ENCODE measurements at regions of chr17 and their contacts with region 1.

Region 1: DNA sequence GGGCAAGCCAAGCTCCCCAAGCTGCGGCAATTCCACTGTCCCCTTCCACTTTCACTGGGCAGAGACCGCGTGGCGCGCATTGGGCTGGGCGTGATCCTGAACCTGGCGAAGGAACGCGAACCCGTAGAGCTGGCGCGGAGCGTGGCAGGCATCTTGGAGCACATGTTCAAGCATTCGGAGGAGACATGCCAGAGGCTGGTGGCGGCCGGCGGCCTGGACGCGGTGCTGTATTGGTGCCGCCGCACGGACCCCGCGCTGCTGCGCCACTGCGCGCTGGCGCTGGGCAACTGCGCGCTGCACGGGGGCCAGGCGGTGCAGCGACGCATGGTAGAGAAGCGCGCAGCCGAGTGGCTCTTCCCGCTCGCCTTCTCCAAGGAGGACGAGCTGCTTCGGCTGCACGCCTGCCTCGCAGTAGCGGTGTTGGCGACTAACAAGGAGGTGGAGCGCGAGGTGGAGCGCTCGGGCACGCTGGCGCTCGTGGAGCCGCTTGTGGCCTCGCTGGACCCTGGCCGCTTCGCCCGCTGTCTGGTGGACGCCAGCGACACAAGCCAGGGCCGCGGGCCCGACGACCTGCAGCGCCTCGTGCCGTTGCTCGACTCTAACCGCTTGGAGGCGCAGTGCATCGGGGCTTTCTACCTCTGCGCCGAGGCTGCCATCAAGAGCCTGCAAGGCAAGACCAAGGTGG is 9.8 kb downstream of the SARM1 start:
- DNase-seq: peak; percentile 51
- H3K4me3 Mint-ChIP-seq: no peak overlapping the region
- H3K27ac Mint-ChIP-seq: no peak overlapping the region
- H3K4me1 Mint-ChIP-seq: peaks cover 27% of the 10 kb centered on the region
- H3K27me3 Mint-ChIP-seq: peaks cover 29% of the 10 kb centered on the region

Region 2: DNA sequence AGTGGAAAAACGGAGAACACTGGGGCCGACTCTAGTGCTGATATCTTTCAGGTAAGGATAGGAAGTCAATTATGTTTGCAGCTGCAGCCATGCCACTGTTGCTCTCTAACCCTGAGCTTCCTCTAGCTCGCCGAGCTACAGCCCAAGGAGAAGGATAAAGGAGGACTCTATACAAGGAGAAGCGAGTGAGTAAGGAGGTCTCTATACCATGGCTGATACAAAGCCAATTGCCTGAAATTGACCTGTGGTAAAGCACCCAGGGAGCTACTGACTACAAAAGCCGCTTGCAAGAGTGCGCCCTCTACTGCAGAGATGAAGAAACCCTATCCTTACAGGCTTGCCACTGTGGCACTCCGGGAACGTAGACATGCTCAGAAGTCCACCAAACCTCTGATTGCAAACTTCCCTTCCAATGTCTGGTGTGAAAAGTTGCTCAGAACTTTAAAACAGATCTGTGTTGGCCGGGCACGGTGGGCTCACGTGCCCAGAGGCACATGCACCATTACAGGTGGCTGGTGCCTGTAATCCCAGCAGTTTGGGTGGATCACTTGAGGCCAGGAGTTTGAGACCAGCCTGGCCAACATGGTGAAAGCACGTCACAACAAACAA is 35.5 kb after region 1 on chr17:
- CTCF ChIA-PET with region 1: interaction called, 22 read pairs
- DNase-seq: peak; percentile 71
- H3K4me3 Mint-ChIP-seq: no peak overlapping the region
- H3K27ac Mint-ChIP-seq: no peak overlapping the region
- H3K4me1 Mint-ChIP-seq: no peaks in the 10 kb centered on the region
- H3K27me3 Mint-ChIP-seq: peaks cover 21% of the 10 kb centered on the region

Region 3: DNA sequence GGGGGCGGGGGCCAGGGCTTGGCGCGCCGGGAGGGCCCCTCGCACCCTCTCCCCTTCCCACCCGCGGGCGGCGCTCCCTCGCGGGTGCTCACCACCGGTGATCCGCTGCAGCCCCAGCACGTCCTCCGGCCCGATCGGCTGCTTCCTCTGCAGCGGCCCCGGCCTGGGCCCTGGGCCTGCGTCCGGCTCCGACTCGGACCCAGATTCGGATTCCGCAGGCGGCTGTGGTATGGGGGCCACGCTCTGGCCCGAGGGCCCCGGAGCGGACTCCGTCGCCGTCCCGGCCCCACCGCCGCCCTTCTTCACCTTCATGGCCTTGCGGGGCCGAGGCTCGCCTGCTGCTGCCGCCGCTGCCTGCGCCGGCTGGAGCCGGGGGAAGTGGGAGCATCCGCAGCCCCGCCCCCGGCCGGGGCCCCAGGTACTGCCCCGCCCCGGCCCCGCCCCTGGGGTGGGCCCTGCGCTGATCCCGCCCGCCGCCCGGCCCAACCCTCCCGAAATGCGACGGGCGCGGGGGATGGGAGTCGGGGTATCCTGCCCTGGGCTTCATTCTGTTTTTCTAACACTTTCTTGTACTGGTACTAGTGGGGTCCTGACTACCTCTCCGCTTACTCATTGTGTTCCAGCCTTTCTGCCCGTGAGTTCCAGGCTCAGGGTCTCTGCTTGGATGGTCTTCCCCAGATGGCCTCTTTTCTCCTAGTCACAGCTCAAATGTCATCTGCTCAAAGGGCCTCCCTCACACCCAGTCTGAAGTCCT is 171.1 kb after region 1 on chr17 and contains the start of gene UNC119:
- CTCF ChIA-PET with region 1: no interaction called
- DNase-seq: peak; percentile 85
- H3K4me3 Mint-ChIP-seq: peak within 1 kb of the TSS; percentile 95
- H3K27ac Mint-ChIP-seq: peak within 1 kb of the TSS; percentile 85
- H3K4me1 Mint-ChIP-seq: peaks cover 53% of the 10 kb centered on the region
- H3K27me3 Mint-ChIP-seq: no peaks in the 10 kb centered on the region

Measured in activated naive CD4-positive, alpha-beta T cell treated with anti-CD3 and anti-CD28 coated beads, Interleukin-2, amount 10 ng/mL, durations not matched to agents 7 days and 5 days (primary cell).